ENCODE measurements at regions of chr2 and their contacts with region 1.

Region 1: GRCh38 chr2:9333591-9334171 is 89.6 kb downstream of the ITGB1BP1 start:
- DNase-seq: peak; percentile 74 to 86 (median 86)
- H3K4me3 ChIP-seq: no peak overlapping the region
- H3K27ac ChIP-seq: no peak overlapping the region
- H3K4me1 ChIP-seq: peaks cover 0 to 43% (median 27%) of the 10 kb centered on the region in 4 experiments
- H3K27me3 ChIP-seq: no peaks in the 10 kb centered on the region

Region 2: DNA sequence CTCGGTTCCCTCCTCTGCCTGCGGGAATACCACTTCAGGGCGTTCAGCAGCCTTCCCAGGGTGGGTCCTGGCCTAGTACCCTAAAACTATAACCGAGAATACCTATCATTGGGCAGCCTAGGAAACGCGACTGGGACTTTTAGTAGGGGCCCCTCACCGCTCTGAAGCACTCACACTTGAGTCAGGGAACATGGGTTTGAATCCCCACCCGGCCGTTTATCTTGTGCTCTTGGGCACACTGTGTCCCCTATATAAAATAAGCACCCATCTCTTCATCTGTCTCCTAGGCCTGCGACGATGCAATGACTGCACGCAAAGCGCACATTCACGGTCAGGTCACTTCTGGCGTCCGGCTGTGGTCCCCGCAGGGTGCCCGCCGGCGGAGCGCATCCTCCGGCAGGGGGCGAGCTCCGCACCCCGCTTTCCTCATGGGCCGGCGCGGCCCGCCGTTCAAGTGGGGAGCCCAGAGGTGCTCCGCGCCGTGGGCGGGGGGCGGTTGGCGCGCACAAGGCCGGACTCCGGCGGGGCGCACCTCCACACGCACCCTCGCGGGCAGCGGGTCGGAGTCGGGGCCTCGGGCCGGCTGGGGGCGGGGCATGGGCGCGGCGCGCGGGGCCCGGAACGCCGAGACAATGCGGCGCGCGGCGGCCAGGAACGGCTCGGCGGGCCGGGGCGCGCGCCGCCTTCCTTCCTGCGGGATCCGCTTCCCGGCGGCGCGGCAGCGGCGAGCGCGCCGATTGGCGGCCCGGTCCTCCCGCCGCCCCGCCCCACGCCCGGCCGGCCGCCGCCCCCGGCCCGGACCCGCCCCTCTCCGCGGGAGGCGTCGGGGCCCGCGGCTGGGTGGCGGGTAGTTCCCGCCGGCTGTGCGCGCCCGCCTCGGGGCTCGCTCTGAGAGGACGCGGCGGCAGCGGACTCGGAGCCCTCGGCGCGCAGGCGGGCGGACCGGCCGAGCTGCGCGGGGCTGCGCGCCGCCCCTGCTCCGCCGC is 127.4 kb before region 1 on chr2 and contains the start of gene ASAP2:
- CTCF ChIA-PET with region 1: interaction called, 12 read pairs
- POLR2A ChIA-PET with region 1: no interaction called
- DNase-seq: peak; percentile 58 to 72 (median 68)
- H3K4me3 ChIP-seq: peak within 1 kb of the TSS; percentile 61 to 85 (median 77)
- H3K27ac ChIP-seq: no peak within 1 kb of the TSS
- H3K4me1 ChIP-seq: peaks cover 0 to 21% (median 17%) of the 10 kb centered on the region in 4 experiments
- H3K27me3 ChIP-seq: peaks cover 0 to 10% (median 0%) of the 10 kb centered on the region in 5 experiments

Region 3: DNA sequence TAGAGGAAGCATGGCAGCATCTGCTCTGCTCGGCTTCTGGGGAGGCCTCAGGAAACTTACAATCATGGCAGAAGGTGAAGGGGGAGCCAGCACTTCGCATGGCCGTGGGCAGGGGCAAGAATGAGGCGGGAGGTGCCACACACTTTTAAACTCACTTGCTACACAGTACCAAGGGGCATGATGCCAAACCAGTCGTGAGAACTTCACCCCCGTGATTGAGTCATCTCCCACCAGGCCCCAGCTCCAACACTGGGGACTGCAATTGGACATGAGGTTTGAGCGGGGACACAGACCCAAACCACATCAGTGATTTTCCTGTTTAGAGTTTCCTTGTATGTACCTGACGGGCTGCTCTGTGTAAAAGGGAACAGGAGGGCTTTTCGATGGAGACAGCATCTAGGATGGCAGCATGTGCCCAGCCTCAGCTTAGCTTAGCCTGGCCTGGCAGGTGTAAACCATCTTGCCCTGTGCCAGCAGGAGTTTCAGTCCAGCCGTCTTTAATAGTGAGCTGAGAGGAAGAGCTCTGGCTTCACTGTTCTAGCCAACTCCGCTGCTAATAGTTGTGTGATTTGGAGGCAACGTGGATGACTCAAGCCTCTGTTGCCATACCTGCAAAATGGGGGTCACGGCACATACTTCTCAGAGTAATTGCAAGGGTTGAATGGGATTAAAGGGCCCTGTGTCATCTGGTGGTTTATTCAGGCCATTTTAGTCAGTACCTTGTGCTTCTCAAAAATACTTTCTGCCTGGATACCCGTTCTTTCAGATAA is 25.3 kb before region 1 on chr2:
- CTCF ChIA-PET with region 1: no interaction called
- POLR2A ChIA-PET with region 1: no interaction called
- DNase-seq: no peak
- H3K4me3 ChIP-seq: no peak overlapping the region
- H3K27ac ChIP-seq: no peak overlapping the region
- H3K4me1 ChIP-seq: no peaks in the 10 kb centered on the region
- H3K27me3 ChIP-seq: no peaks in the 10 kb centered on the region